Heart right ventricle (tissue), 16 donors: ENCODE measurements at regions of chr21 and their contacts with region 1.

Region 1: DNA sequence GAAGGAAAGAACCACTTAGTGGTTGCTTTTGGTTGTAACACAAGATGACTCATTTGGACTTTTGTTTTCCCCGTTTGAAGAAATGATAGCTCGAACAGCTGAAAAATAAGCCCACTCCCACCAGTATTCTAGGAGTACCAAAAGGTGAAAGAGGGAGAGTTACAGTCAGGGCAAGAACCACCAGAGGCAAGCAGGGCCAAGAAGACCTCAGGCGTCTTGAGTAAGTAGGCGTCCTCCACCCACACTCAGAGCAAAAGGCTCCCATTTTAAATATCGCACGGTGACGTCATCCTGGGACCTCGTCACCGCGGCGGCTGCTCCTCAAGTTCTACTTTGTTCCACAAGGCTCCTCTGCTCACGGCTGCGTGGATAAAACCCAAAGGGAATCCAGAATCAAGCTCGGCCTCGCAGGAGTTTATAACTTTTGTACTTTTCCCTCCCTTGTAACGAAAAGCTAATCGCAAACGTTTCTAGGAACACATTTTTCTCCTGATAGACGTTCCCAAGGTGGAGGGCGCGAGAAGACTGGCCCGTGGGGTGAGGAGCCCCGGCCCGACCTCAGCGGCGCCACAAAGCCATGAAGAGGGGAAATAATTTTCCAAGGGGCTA is 1.2 kb downstream of the BTG3 start:
- DNase-seq: peak; percentile 59 to 81
- ATAC-seq: peak; percentile 57 to 90 (median 76)
- H3K4me3 ChIP-seq: peak overlapping the region; percentile 78 to 92 (median 84)
- H3K27ac ChIP-seq: peak overlapping the region in 9 of 10 donors; percentile 47 to 91 (median 85)
- H3K4me1 ChIP-seq: peaks cover 0 to 24% (median 11%) of the 10 kb centered on the region in 9 donors
- H3K27me3 ChIP-seq: peaks cover 0 to 2% (median 0%) of the 10 kb centered on the region in 7 donors
- CTCF ChIP-seq: peak in 1 of 9 donors; percentile 5

Region 2: DNA sequence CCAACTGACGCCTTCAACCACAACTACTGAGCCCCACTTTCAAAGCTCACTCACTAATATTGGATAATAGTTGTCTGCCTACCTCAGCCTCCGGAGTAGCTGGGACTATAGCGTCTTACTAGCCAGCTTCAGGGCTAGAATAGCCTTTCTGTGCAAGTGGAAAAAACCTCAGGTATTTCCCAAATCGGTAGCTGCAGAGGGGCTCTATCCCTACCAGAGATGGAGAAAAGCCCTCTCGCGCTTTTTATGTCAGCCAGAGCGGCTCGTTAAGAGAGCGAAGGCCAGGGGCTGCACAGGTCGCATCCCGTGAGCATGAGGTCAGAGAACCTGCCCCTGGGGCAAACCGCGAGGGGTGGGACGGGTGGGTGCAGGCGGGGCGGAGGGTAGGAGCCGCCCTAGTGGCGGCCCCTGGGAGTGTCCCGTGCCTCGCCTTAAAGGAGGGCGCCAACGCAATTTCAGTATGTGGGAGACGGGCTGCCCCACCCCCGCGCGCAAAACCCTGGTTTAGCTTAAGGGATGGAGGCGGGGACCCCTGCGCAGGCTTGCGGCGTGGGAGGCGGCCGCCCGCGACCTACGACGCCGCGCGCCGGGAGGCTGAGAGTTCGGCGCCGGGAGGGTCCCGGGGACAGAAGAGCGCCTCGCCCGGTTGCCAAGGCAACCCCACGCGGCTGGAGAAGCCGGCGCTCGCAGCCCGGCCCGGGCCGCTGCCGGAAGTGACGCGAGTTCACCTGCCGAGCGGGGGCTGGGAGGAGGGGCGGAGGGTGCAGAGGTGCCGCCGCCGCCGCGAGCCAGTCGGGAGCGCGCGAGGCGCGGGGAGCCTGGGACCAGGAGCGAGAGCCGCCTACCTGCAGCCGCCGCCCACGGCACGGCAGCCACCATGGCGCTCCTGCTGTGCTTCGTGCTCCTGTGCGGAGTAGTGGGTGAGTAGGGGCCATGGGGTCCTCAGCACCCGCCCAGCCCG is 99.0 kb before region 1 on chr21 and contains the start of gene CXADR:
- intact Hi-C with region 1: no loop called
- DNase-seq: peak; percentile 63 to 76
- ATAC-seq: peak; percentile 86 to 98 (median 90)
- H3K4me3 ChIP-seq: peak within 1 kb of the TSS; percentile 46 to 80 (median 66)
- H3K27ac ChIP-seq: peak within 1 kb of the TSS; percentile 50 to 94 (median 86)
- H3K4me1 ChIP-seq: peaks cover 0 to 24% (median 11%) of the 10 kb centered on the region in 9 donors
- H3K27me3 ChIP-seq: peaks cover 0 to 58% (median 12%) of the 10 kb centered on the region in 7 donors
- CTCF ChIP-seq: peak; percentile 35 to 60 (median 53)
- total RNA-seq, gene CXADR: 16.7 to 42.1 (median 28.5) TPM

Region 3: GRCh38 chr21:17598437-17598836 is 13.1 kb before region 1 on chr21:
- intact Hi-C with region 1: no loop called
- DNase-seq: no peak
- ATAC-seq: no peak
- H3K4me3 ChIP-seq: no peak overlapping the region
- H3K27ac ChIP-seq: no peak overlapping the region
- H3K4me1 ChIP-seq: no peaks in the 10 kb centered on the region
- H3K27me3 ChIP-seq: no peaks in the 10 kb centered on the region
- CTCF ChIP-seq: no peak

Region 4: DNA sequence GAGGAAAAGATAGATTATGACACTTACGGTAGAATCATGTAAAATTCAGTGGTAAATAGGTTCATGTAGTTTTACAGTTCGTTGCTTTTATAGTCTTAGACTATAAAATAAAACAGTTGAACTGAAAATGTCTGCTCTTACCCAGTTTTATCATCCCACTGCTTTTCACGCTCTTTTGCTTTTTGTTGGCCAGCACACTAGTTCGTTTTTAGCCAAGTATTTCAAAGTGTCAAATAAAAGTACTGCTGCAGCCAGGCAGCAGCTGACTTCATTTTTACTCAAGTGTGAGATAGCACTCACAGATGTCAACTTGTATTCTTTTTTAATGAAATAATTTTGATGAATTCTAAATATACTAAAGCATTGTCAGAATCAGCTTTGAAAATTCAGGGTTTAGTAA is 19.7 kb after region 1 on chr21:
- intact Hi-C with region 1: loop called in 1 of 10 experiments (anchors 1 kb)
- DNase-seq: no peak
- ATAC-seq: no peak
- H3K4me3 ChIP-seq: no peak overlapping the region
- H3K27ac ChIP-seq: no peak overlapping the region
- H3K4me1 ChIP-seq: peaks cover 0 to 12% (median 0%) of the 10 kb centered on the region in 9 donors
- H3K27me3 ChIP-seq: no peaks in the 10 kb centered on the region
- CTCF ChIP-seq: no peak

Region 5: GRCh38 chr21:17889171-17889570 is 277.7 kb after region 1 on chr21:
- intact Hi-C with region 1: no loop called
- DNase-seq: no peak
- ATAC-seq: no peak
- H3K4me3 ChIP-seq: no peak overlapping the region
- H3K27ac ChIP-seq: no peak overlapping the region
- H3K4me1 ChIP-seq: no peaks in the 10 kb centered on the region
- H3K27me3 ChIP-seq: no peaks in the 10 kb centered on the region
- CTCF ChIP-seq: no peak